ENCODE measurements at regions of chr2 and their contacts with region 1.

Region 1: GRCh38 chr2:68185541-68186164 is 28.0 kb downstream of the PNO1 start:
- DNase-seq: peak; percentile 58
- H3K4me3 Mint-ChIP-seq: no peak overlapping the region
- H3K27ac Mint-ChIP-seq: no peak overlapping the region
- H3K4me1 Mint-ChIP-seq: peaks cover 24% of the 10 kb centered on the region
- H3K27me3 Mint-ChIP-seq: no peaks in the 10 kb centered on the region

Region 2: GRCh38 chr2:67812682-67813081 is 373.0 kb before region 1 on chr2:
- CTCF ChIA-PET with region 1: no interaction called
- POLR2A ChIA-PET with region 1: no interaction called
- DNase-seq: no peak
- H3K4me3 Mint-ChIP-seq: no peak overlapping the region
- H3K27ac Mint-ChIP-seq: no peak overlapping the region
- H3K4me1 Mint-ChIP-seq: no peaks in the 10 kb centered on the region
- H3K27me3 Mint-ChIP-seq: no peaks in the 10 kb centered on the region

Region 3: DNA sequence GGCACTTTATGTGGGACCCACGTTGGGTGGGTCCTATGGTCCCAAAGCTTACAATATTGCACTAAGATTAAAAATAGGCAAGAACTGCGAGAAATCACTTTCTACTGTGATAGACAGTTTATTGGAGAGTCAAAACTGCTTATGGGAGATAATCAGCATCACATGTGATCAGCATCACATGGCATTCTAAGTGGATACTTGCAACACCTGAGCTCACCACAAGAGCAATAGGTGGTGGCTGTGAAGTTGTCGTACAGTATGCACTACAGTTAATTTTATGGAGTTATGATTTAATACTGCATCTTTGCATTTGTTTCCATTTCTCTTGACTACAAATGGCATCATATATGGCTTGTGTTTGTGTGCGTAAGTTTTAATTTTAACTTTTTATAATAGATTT is 16.4 kb before region 1 on chr2:
- CTCF ChIA-PET with region 1: interaction called, 10 read pairs
- POLR2A ChIA-PET with region 1: no interaction called
- DNase-seq: no peak
- H3K4me3 Mint-ChIP-seq: no peak overlapping the region
- H3K27ac Mint-ChIP-seq: no peak overlapping the region
- H3K4me1 Mint-ChIP-seq: peaks cover 6% of the 10 kb centered on the region
- H3K27me3 Mint-ChIP-seq: no peaks in the 10 kb centered on the region

Measured in activated CD4-positive, alpha-beta memory T cell treated with anti-CD3 and anti-CD28 coated beads, Interleukin-2, amount 10 ng/mL, durations not matched to agents 7 days and 5 days (primary cell).